Panc1 (cell line): ENCODE measurements at regions of chr17 and their contacts with region 1.

Region 1: GRCh38 chr17:48738803-48739526 is 10.4 kb upstream of the HOXB13 start:
- DNase-seq: no peak
- ATAC-seq: no peak
- H3K4me3 ChIP-seq: no peak overlapping the region
- H3K27ac ChIP-seq: no peak overlapping the region
- H3K4me1 ChIP-seq: no peaks in the 10 kb centered on the region
- H3K27me3 ChIP-seq: no peaks in the 10 kb centered on the region; the same call in 1 of the 2 replicates
- CTCF ChIP-seq: no peak

Region 2: GRCh38 chr17:48804925-48805411 is 66.0 kb after region 1 on chr17:
- CTCF ChIA-PET with region 1: no interaction called
- POLR2A ChIA-PET with region 1: no interaction called
- in situ Hi-C with region 1: loop called (anchors 5 kb)
- intact Hi-C with region 1: no loop called
- DNase-seq: no peak
- ATAC-seq: peak; percentile 97
- H3K4me3 ChIP-seq: no peak overlapping the region
- H3K27ac ChIP-seq: no peak overlapping the region
- H3K4me1 ChIP-seq: peaks cover 3% of the 10 kb centered on the region; the same call in 1 of the 2 replicates
- H3K27me3 ChIP-seq: no peaks in the 10 kb centered on the region; the same call in 1 of the 2 replicates
- CTCF ChIP-seq: peak; percentile 99